Posterior vena cava (tissue), 2 donors: ENCODE measurements at regions of chr1 and their contacts with region 1.

Region 1: GRCh38 chr1:208029381-208030287 is 118.7 kb upstream of the CD34 start:
- DNase-seq: peak; percentile 78

Region 2: GRCh38 chr1:208093754-208094719 is 64.4 kb after region 1 on chr1:
- intact Hi-C with region 1: loop called in 1 of 2 experiments (anchors 10 kb)
- DNase-seq: peak; percentile 87